ENCODE measurements at regions of chr12 and their contacts with region 1.

Region 1: DNA sequence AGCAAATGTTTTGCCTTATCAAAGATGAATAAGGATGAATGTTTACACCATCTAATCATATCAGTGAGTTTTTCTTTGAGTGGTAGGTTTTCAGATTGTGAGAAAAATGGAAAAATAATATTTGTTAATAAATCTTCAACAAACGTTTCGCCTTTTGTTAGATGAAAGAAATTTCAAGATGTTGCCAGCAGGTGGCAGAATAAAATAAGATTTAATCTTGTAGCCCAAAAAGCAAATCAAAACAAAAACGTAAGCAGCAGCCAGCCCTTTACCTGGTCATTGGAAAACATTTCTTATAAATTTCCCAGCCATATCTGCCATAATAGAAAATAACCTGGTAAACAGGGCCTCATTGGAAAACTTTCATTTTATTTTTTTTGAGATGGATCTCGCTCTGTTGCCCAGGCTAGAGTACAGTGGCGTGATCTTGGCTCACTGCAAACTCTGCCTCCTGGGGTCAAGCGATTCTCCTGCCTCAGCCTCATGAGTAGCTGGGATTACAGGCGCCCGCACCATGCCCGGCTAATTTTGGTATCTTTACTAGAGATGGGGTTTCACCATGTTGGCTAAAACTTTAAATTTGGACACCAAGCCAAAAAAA is 15.4 kb upstream of the TMEM120B start:
- DNase-seq: peak in 1 of 2 donors; percentile 54
- ATAC-seq: no peak
- H3K4me3 ChIP-seq: no peak overlapping the region
- H3K27ac ChIP-seq: no peak overlapping the region
- H3K4me1 ChIP-seq: peaks cover 0 to 6% (median 0%) of the 10 kb centered on the region in 9 donors
- H3K27me3 ChIP-seq: no peaks in the 10 kb centered on the region
- CTCF ChIP-seq: peak; percentile 35 to 75 (median 59)

Region 2: DNA sequence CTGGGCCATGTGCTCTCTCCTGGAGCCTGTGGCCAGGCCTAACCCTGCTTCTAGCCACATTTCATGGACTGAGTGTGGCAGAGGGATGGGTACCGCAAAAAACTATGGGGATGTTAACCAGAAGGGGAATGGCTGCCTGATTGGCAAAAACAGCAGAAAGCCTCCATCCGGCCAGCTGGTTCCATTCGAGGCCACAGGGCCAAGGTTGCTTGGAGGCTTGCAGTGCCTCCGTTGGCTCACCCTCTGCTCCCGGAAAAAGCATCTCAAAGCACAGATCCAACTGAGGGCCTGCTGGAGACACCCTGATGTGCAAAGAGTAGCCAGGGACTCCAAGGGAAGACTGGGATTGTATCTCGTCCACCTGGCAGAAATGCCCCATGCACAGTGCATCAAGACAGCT is 31.8 kb after region 1 on chr12:
- intact Hi-C with region 1: no loop called
- DNase-seq: no peak
- ATAC-seq: no peak
- H3K4me3 ChIP-seq: no peak overlapping the region
- H3K27ac ChIP-seq: no peak overlapping the region
- H3K4me1 ChIP-seq: no peaks in the 10 kb centered on the region
- H3K27me3 ChIP-seq: no peaks in the 10 kb centered on the region
- CTCF ChIP-seq: no peak

Region 3: DNA sequence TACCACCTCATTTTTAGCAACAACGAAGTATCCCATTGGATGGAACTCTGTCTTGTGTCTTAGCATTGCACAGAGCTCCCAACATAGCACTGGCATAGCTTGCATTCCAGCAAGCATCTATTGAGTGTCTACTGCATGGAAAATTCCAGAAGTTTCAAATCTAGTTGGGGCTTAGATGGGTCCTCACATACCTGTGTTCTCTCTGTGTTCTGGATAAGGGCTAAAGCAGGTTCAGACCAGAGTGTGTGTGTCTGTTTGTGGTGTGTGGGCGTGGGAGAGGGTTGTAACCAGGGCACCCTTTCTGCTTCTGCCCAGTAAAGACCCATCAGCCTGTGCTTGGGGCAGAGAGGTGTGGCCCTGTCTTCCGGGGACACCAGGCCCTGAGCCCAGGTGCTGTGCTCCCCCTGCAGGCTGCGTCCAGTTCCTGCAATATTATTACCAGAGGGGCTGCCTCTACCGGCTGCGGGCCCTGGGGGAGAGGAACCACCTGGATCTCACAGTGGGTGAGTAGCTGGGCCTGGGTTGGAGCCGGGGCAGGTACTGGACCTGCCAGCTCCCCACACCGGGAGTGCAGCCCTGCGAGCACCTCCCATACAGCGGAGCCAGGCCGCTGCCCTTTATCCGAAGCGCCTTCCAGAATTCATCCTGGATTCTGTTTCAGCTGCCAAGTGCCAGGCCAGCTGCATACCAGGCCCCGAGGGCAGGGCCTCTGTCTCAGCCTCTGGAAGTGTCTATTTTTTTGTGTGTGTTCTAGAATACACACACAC is 76.0 kb after region 1 on chr12:
- intact Hi-C with region 1: loop called (anchors 1 to 5 kb)
- DNase-seq: peak; percentile 64 to 70
- ATAC-seq: peak; percentile 56 to 78 (median 68)
- H3K4me3 ChIP-seq: peak overlapping the region in 1 of 10 donors; percentile 11
- H3K27ac ChIP-seq: peak overlapping the region in 9 of 10 donors; percentile 31 to 80 (median 72)
- H3K4me1 ChIP-seq: peaks cover 4 to 68% (median 29%) of the 10 kb centered on the region in 9 donors
- H3K27me3 ChIP-seq: no peaks in the 10 kb centered on the region
- CTCF ChIP-seq: peak; percentile 54 to 87 (median 79)

Region 4: DNA sequence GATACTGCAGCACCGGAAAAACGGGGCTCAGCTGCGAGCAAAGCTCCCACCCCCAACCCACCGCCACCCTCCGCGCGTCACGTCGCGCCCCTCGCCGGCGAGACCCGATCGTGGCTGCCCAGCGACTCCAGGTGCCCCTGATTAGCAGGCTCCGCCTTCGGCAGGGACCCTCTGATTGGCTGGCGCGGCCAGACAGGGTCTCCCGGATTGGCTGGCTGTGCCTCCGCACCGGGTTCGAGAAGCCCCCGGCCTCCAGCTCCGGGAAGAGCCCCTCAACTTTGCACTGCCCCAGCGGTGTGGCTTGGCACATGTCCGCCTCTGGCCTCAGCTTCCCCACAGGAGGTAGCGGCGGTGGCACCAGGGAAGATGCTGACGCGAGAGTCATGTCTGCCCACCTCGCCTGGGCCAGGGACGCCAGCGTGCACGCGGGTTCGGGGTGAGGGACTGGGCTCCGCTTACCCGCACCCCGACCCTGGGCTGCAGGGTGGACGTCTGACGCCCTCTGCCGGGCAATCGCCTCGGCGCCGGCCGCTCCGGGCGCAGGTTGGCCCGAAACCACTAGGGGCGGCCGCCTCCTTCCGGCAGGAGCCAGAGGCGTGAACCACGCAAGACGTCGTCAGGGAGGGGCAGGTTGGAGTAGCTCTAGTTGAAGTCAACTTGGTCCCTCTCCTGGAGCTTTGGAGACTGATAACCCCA is 96.8 kb after region 1 on chr12:
- intact Hi-C with region 1: loop called (anchors 1 to 5 kb)
- DNase-seq: peak; percentile 90 to 92
- ATAC-seq: peak; percentile 60 to 79 (median 68)
- H3K4me3 ChIP-seq: peak overlapping the region; percentile 32 to 72 (median 58)
- H3K27ac ChIP-seq: peak overlapping the region in 9 of 10 donors; percentile 68 to 100 (median 100)
- H3K4me1 ChIP-seq: peaks cover 41 to 87% (median 76%) of the 10 kb centered on the region in 9 donors
- H3K27me3 ChIP-seq: no peaks in the 10 kb centered on the region
- CTCF ChIP-seq: peak; percentile 99 to 100 (median 100)

Region 5: GRCh38 chr12:121811434-121812319 is 114.5 kb after region 1 on chr12:
- intact Hi-C with region 1: loop called in 1 of 10 experiments (anchors 5 kb)
- DNase-seq: peak; percentile 67 to 79
- ATAC-seq: peak; percentile 86 to 94 (median 90)
- H3K4me3 ChIP-seq: peak overlapping the region; percentile 31 to 68 (median 60)
- H3K27ac ChIP-seq: peak overlapping the region in 9 of 10 donors; percentile 38 to 82 (median 63)
- H3K4me1 ChIP-seq: peaks cover 18 to 56% (median 48%) of the 10 kb centered on the region in 9 donors
- H3K27me3 ChIP-seq: no peaks in the 10 kb centered on the region
- CTCF ChIP-seq: peak in 8 of 9 donors; percentile 97 to 99 (median 99)

Region 6: DNA sequence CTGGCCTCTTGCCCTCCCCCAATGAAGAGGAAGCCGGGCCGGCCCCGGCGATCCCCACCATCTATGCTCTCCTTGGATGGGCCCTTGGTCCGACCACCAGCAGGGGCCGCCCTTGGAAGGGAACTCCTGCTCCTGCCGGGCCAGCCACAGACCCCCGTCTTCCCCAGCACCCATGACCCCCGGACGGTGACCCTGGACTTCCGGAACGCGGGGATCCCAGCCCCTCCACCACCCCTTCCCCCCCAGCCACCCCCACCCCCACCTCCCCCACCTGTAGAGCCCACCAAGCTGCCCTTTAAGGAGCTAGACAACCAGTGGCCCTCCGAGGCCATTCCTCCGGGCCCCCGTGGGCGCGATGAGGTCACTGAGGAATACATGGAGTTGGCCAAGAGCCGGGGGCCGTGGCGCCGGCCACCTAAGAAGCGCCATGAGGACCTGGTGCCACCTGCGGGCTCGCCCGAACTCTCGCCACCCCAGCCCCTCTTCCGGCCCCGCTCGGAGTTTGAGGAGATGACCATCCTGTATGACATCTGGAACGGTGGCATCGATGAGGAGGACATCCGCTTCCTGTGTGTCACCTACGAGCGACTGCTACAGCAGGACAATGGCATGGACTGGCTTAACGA is 126.0 kb after region 1 on chr12:
- intact Hi-C with region 1: no loop called
- DNase-seq: no peak
- ATAC-seq: peak in 2 of 8 donors; percentile 2 to 7
- H3K4me3 ChIP-seq: no peak overlapping the region
- H3K27ac ChIP-seq: no peak overlapping the region
- H3K4me1 ChIP-seq: no peaks in the 10 kb centered on the region
- H3K27me3 ChIP-seq: no peaks in the 10 kb centered on the region
- CTCF ChIP-seq: no peak

Region 7: DNA sequence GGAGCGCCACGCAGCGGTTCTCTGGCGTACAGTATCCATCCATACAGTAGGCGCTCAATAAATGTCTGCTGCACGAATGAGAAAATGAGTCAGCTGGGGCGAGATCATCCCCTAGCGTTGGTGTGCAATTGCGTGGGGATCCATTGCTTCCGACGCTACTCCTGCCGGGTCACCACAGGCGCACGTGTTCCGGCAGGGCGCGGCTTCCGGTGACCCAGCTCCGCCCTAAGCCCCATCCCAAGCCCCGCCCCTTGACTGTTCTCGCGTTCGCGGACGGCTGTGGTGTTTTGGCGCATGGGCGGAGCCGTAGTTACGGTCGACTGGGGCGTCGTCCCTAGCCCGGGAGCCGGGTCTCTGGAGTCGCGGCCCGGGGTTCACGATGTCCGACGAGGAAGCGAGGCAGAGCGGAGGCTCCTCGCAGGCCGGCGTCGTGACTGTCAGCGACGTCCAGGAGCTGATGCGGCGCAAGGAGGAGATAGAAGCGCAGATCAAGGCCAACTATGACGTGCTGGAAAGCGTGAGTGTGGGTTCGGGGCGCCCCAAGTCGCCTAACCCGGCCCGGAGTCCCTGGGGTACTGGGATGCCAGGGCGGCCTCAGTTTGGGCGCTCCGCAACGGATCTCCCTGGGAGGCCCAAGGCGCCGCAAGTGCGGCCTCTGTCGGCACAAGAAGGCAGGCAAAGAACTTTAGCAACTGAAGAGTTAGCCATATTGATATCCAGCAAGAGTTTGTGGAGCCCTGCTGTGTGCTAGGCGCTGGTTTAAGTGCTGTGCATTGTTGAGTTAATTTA is 191.5 kb after region 1 on chr12 and contains the start of gene PSMD9:
- intact Hi-C with region 1: loop called in 7 of 10 experiments (anchors 1 to 10 kb)
- DNase-seq: peak; percentile 98
- ATAC-seq: peak; percentile 99 to 100 (median 99)
- H3K4me3 ChIP-seq: peak within 1 kb of the TSS; percentile 62 to 99 (median 92)
- H3K27ac ChIP-seq: peak within 1 kb of the TSS; percentile 79 to 98 (median 96)
- H3K4me1 ChIP-seq: peaks cover 8 to 31% (median 24%) of the 10 kb centered on the region in 9 donors
- H3K27me3 ChIP-seq: no peaks in the 10 kb centered on the region
- CTCF ChIP-seq: peak; percentile 35 to 79 (median 66)
- total RNA-seq, gene PSMD9: 29.3 to 39.9 (median 34.4) TPM

Region 8: GRCh38 chr12:121894633-121895032 is 197.4 kb after region 1 on chr12:
- intact Hi-C with region 1: loop called in 6 of 10 experiments (anchors 2 to 10 kb)
- DNase-seq: no peak
- ATAC-seq: peak in 1 of 8 donors; percentile 37
- H3K4me3 ChIP-seq: no peak overlapping the region
- H3K27ac ChIP-seq: no peak overlapping the region
- H3K4me1 ChIP-seq: peaks cover 6 to 23% (median 19%) of the 10 kb centered on the region in 9 donors
- H3K27me3 ChIP-seq: no peaks in the 10 kb centered on the region
- CTCF ChIP-seq: peak in 2 of 9 donors; percentile 8 to 25